Ascending aorta (tissue), 2 donors: ENCODE measurements at regions of chr19 and their contacts with region 1.

Region 1: DNA sequence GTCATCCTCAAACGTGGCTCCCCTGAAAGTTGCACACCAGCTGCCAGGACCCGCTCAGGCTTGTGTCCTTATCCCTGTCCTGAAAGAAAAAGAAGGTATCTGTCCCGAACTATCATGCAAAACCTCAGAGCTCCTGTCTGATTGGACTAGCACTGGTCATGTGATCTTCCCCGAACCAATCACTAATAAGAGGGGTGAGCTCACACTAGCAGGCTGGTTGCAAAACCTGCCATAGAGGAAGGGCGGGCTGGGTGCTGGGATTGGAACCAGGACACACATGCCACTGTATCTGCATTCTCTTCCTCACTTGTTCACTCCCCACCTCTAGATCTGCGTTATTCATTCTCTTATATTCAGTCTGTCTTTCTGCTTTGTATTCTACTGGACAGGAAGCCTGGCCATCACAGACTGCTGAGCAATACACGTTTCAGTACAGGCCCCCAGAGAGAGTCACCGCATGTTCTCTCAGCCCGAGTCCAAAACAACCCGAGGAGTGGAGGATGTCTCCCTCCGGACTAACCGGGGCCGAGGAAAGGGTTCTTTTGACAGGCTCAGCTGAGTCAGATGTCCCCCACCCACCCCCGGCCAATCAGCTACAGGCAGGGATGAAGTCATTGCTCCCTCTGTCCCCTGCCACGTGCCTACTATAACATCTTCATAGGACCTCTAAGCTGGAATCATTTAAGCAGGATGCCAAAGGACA is 97.7 kb downstream of the SIPA1L3 start:
- DNase-seq: peak; percentile 77 to 92
- H3K4me3 ChIP-seq: peak overlapping the region; percentile 54 to 62
- H3K27ac ChIP-seq: peak overlapping the region; percentile 81 to 83
- H3K4me1 ChIP-seq: peaks cover 0 to 18% of the 10 kb centered on the region in 2 donors
- H3K27me3 ChIP-seq: no peaks in the 10 kb centered on the region
- CTCF ChIP-seq: no peak

Region 2: DNA sequence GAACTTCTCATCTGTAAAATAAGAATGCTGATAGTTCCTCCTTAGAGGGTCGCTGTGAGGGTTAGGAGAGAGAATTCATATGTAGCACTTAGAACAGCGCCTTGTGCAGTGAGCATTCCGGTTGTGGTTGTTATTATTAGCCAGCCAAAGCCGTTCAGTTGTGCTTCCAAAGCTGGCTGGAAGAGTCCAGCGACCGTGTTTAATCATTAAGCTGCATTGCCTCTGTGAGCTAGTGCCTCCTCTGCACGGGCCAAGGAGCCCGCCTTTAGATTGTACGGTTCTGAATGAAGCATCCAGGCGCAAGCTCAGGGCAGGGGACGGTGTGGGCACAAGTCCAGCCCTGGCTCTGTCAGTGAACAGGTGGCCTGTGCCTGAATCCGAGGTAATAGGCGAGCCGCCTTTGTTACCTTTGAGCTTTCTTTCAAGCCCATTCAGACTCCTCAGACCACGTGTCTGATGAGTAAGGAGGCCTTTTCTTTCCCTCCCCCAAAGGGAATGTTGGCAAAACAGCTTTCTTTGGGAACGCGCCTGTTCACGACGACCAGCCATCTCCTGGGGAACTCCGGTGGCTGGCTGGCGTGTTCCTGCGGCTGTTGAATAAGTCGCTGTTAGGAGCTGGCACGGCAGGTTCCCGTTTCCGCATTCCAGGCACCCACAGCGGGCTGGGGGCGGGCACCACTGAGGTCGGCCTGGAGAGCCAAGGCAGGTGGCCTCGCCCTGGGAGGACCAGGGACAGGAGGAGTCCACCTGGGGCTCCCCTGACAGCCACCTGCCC is 72.6 kb before region 1 on chr19:
- intact Hi-C with region 1: loop called (anchors 5 kb)
- DNase-seq: peak in 1 of 2 donors; percentile 77
- H3K4me3 ChIP-seq: peak overlapping the region in 1 of 2 donors; percentile 52
- H3K27ac ChIP-seq: peak overlapping the region in 1 of 2 donors; percentile 12
- H3K4me1 ChIP-seq: peaks cover 3 to 9% of the 10 kb centered on the region in 2 donors
- H3K27me3 ChIP-seq: no peaks in the 10 kb centered on the region
- CTCF ChIP-seq: no peak

Region 3: DNA sequence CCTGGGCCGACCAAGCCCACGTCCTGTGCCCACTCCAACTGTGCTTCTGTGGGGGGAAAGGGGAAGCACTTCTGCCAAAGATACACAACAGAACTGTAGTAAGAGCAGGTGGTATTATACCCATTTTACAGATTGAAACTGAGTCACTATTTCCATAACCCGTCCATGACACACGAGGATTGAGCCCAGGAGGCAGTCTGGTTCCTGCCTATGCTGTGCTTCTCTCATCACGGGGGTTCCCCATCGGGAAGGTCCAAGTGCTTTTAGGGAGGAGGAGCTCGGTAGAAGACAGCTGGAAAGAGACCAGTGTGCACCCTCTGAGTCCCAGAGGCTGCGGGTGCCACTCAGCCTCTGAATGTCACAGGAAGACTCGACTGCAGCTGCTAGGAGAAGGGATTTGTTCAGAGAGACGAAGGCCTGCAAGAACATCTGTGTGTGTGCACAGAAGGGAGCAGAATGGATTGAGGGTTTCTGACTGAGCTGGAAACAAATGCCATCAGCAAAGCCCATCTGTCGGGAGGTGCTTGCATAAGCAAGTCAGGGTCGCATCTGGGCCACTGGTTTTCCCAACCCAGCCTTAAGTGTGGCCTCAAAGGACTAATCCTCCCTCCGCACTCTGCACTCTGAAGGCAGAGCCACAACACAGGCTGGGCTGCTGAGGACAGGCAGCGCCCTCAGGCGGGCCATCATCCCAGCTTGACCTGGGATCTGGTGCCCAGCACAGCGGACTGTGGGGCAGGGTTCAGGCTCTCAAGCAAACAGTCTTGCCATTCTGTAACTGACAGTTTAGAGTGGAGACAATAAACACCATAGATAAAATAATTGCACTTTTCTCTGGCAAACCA is 69.4 kb after region 1 on chr19:
- intact Hi-C with region 1: no loop called
- DNase-seq: no peak
- H3K4me3 ChIP-seq: no peak overlapping the region
- H3K27ac ChIP-seq: no peak overlapping the region
- H3K4me1 ChIP-seq: no peaks in the 10 kb centered on the region
- H3K27me3 ChIP-seq: no peaks in the 10 kb centered on the region
- CTCF ChIP-seq: no peak